Naive thymus-derived CD4-positive, alpha-beta T cell (primary cell): ENCODE measurements at regions of chr18 and their contacts with region 1.

Region 1: DNA sequence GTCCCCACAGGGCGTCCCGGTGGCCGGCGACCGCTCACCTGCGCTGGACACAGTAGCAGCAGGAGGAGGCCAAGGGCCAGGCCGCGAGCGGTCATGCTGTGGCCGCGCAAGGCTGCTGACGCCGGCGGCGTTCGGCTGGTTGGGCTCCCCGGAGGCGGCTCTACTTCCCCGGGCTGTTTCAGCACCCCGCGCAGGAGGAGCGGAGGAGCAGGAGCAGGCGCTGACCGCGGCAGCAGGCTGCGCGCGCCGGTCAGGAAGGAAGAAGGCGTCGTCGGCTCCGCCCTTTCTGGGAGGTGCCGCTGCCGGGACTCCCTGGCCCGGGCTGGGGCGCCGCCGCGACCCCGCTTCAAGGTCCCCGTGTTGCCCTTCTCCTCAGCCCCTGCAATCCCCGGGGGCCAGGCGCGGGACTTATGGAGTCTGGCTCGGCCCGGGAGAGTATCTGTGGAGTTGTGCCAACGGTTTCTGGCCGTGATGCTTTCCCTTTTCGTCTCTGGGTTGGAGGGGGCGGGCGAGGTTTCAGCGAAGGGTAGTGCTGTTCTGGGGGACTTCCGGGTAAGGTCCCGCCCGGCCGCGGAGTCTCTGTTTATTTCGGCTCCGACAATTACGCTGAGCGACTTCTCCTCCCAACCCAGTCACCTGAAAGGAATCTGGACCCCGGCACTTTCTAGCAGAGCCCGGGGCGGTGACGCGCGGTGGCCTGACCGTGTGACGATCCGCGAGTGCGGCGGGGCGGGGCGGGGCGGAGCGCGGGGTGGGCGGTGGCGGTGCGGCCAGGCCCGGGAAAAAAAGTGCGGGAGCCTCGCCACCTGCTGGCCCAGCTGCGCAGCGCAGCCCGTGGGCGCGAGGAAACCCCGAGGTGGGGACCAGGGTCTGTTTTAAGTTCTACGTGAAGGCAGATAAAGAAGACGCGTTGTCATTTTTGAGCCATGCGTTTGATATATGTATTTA is at the start of gene NPC1:
- DNase-seq: peak; percentile 88 to 95 (median 93)
- ATAC-seq: peak; percentile 93
- H3K4me3 ChIP-seq: peak within 1 kb of the TSS; percentile 76
- H3K4me3 Mint-ChIP-seq: peak within 1 kb of the TSS; percentile 79 to 96 (median 92)
- H3K27ac ChIP-seq: peak within 1 kb of the TSS; percentile 100
- H3K27ac Mint-ChIP-seq: peak within 1 kb of the TSS; percentile 84 to 97 (median 94)
- H3K4me1 ChIP-seq: peaks cover 9 to 25% of the 10 kb centered on the region in 2 donors
- H3K4me1 Mint-ChIP-seq: peaks cover 25 to 45% (median 37%) of the 10 kb centered on the region in 7 donors
- H3K27me3 ChIP-seq: no peaks in the 10 kb centered on the region
- H3K27me3 Mint-ChIP-seq: peaks cover 0 to 13% (median 0%) of the 10 kb centered on the region in 5 donors
- total RNA-seq, gene NPC1: 29.2 to 49.3 (median 31.4) TPM

Region 2: DNA sequence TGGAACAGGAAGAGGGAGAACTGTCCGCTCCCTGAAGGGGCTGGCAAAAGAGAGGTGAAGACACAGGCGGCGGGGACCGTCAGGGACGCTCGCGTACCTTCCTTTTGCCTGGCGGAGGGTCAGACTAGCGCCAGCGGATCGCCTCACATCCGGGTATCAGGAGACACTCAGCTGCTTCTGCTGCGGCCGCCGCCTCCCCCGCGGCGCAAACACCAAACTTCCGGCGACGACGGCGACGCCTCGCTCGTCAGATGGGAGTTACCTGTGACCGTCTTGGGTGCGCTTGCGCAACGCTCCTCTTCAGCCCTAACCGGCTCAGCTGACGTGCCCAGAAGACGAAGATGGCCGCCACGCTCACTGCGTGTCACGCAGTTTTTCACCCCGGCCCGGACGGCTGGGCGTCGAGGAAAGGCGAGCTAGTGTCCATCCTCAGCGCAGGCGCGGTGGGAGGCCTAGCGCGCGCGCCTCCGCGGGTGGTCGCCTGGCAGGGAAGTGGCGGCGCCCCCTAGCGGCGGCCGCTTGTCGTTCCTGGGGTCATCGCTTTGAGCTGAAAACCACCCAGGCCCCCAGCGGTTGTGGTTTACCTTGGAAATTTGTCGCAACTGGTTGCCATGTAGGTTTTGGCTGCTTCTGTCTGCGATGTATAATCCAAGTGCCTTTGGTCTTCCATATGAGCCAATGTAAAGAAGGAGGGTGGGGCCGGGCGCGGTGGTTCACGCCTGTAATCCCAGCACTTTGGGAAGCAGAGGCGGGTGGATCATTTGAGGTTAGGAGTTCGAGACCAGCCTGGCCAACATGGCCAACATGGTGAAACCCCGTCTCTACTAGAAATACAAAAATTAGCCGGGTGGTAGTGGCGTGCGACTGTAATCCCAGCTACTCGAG is 1985.8 kb before region 1 on chr18 and contains the start of gene ESCO1:
- CTCF ChIA-PET with region 1: no interaction called
- POLR2A ChIA-PET with region 1: no interaction called
- intact Hi-C with region 1: loop called in 1 of 2 experiments (anchors 10 kb)
- DNase-seq: peak; percentile 88 to 97 (median 95)
- ATAC-seq: peak; percentile 90
- H3K4me3 ChIP-seq: peak within 1 kb of the TSS; percentile 99
- H3K4me3 Mint-ChIP-seq: peak within 1 kb of the TSS; percentile 91 to 99 (median 96)
- H3K27ac ChIP-seq: peak within 1 kb of the TSS; percentile 84
- H3K27ac Mint-ChIP-seq: peak within 1 kb of the TSS; percentile 96 to 100 (median 99)
- H3K4me1 ChIP-seq: peaks cover 12 to 24% of the 10 kb centered on the region in 2 donors
- H3K4me1 Mint-ChIP-seq: peaks cover 16 to 57% (median 36%) of the 10 kb centered on the region in 7 donors
- H3K27me3 ChIP-seq: no peaks in the 10 kb centered on the region
- H3K27me3 Mint-ChIP-seq: no peaks in the 10 kb centered on the region
- total RNA-seq, gene ESCO1: 25.9 to 36.4 (median 35.1) TPM

Region 3: GRCh38 chr18:22800551-22800951 is 786.0 kb before region 1 on chr18:
- CTCF ChIA-PET with region 1: no interaction called
- POLR2A ChIA-PET with region 1: no interaction called
- intact Hi-C with region 1: loop called in 1 of 2 experiments (anchors 2 kb)
- DNase-seq: no peak
- ATAC-seq: no peak
- H3K4me3 ChIP-seq: no peak overlapping the region
- H3K4me3 Mint-ChIP-seq: no peak overlapping the region
- H3K27ac ChIP-seq: no peak overlapping the region
- H3K27ac Mint-ChIP-seq: no peak overlapping the region
- H3K4me1 ChIP-seq: no peaks in the 10 kb centered on the region
- H3K4me1 Mint-ChIP-seq: no peaks in the 10 kb centered on the region
- H3K27me3 ChIP-seq: no peaks in the 10 kb centered on the region
- H3K27me3 Mint-ChIP-seq: peaks cover 0 to 19% (median 0%) of the 10 kb centered on the region in 5 donors

Region 4: DNA sequence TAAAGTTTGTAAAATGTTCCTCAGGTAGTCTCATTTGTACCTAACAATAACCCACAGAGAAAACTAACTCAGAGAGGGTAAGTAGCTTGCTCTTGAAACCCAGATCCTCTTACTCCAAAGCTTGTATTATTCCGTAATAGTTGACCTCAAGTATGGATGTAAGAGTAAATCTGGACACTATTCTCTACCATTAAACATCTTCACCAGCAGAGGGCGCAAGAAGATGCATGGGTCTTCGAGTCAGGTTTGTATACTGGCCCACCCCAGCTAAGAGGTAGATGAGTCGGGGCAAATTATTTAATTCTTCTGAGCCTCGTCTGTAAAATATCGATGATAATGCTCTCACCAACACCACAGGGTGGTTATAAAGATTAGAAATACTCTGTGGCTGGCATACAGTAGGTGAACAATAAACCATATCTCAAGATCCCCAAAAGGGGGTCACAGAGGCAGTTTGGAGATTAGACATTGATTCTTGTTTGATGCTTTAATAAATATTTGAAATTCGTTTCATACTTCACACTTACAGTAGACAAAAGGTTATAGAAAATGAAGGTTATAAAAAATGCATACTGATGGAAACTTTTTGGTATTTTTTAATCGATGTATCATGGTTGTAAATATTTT is 454.7 kb before region 1 on chr18:
- CTCF ChIA-PET with region 1: no interaction called
- POLR2A ChIA-PET with region 1: no interaction called
- intact Hi-C with region 1: loop called in 1 of 2 experiments (anchors 2 kb)
- DNase-seq: peak in 8 of 9 donors; percentile 33 to 73 (median 58)
- ATAC-seq: peak; percentile 64
- H3K4me3 ChIP-seq: no peak overlapping the region
- H3K4me3 Mint-ChIP-seq: no peak overlapping the region
- H3K27ac ChIP-seq: no peak overlapping the region
- H3K27ac Mint-ChIP-seq: peak overlapping the region in 1 of 9 donors; percentile 9
- H3K4me1 ChIP-seq: peaks cover 0 to 14% of the 10 kb centered on the region in 2 donors
- H3K4me1 Mint-ChIP-seq: peaks cover 0 to 20% (median 15%) of the 10 kb centered on the region in 7 donors
- H3K27me3 ChIP-seq: peaks cover 3 to 9% of the 10 kb centered on the region in 2 donors
- H3K27me3 Mint-ChIP-seq: peaks cover 16 to 30% (median 25%) of the 10 kb centered on the region in 5 donors

Region 5: GRCh38 chr18:23437357-23438045 is 149.0 kb before region 1 on chr18:
- CTCF ChIA-PET with region 1: no interaction called
- POLR2A ChIA-PET with region 1: no interaction called
- intact Hi-C with region 1: loop called in 1 of 2 experiments (anchors 5 kb)
- DNase-seq: peak; percentile 52 to 83 (median 71)
- ATAC-seq: peak; percentile 99
- H3K4me3 ChIP-seq: peak overlapping the region; percentile 84
- H3K4me3 Mint-ChIP-seq: peak overlapping the region; percentile 87 to 93 (median 90)
- H3K27ac ChIP-seq: peak overlapping the region; percentile 57
- H3K27ac Mint-ChIP-seq: peak overlapping the region in 7 of 9 donors; percentile 47 to 82 (median 77)
- H3K4me1 ChIP-seq: peaks cover 0 to 7% of the 10 kb centered on the region in 2 donors
- H3K4me1 Mint-ChIP-seq: peaks cover 8 to 26% (median 19%) of the 10 kb centered on the region in 7 donors
- H3K27me3 ChIP-seq: no peaks in the 10 kb centered on the region
- H3K27me3 Mint-ChIP-seq: peaks cover 0 to 2% (median 0%) of the 10 kb centered on the region in 5 donors

Region 6: GRCh38 chr18:23515911-23516546 is 70.5 kb before region 1 on chr18:
- CTCF ChIA-PET with region 1: interaction called, 16 read pairs
- POLR2A ChIA-PET with region 1: interaction called, 13 read pairs
- intact Hi-C with region 1: loop called (anchors 1 kb)
- DNase-seq: peak; percentile 39 to 76 (median 69)
- ATAC-seq: peak; percentile 99
- H3K4me3 ChIP-seq: no peak overlapping the region
- H3K4me3 Mint-ChIP-seq: no peak overlapping the region
- H3K27ac ChIP-seq: no peak overlapping the region
- H3K27ac Mint-ChIP-seq: peak overlapping the region; percentile 1 to 81 (median 66)
- H3K4me1 ChIP-seq: peaks cover 0 to 6% of the 10 kb centered on the region in 2 donors
- H3K4me1 Mint-ChIP-seq: peaks cover 7 to 37% (median 13%) of the 10 kb centered on the region in 7 donors
- H3K27me3 ChIP-seq: no peaks in the 10 kb centered on the region
- H3K27me3 Mint-ChIP-seq: no peaks in the 10 kb centered on the region

Region 7: GRCh38 chr18:23573626-23574431 is 12.7 kb before region 1 on chr18:
- CTCF ChIA-PET with region 1: interaction called, 3 read pairs
- POLR2A ChIA-PET with region 1: no interaction called
- intact Hi-C with region 1: loop called (anchors 1 kb)
- DNase-seq: peak in 1 of 9 donors; percentile 38
- ATAC-seq: peak; percentile 58
- H3K4me3 ChIP-seq: peak overlapping the region; percentile 26
- H3K4me3 Mint-ChIP-seq: peak overlapping the region; percentile 17 to 73 (median 49)
- H3K27ac ChIP-seq: peak overlapping the region; percentile 30
- H3K27ac Mint-ChIP-seq: peak overlapping the region; percentile 56 to 91 (median 66)
- H3K4me1 ChIP-seq: peaks cover 17 to 66% of the 10 kb centered on the region in 2 donors
- H3K4me1 Mint-ChIP-seq: peaks cover 27 to 60% (median 41%) of the 10 kb centered on the region in 7 donors
- H3K27me3 ChIP-seq: no peaks in the 10 kb centered on the region
- H3K27me3 Mint-ChIP-seq: no peaks in the 10 kb centered on the region